Esophagus muscularis mucosa (tissue), 4 donors: ENCODE measurements at regions of chr22 and their contacts with region 1.

Region 1: DNA sequence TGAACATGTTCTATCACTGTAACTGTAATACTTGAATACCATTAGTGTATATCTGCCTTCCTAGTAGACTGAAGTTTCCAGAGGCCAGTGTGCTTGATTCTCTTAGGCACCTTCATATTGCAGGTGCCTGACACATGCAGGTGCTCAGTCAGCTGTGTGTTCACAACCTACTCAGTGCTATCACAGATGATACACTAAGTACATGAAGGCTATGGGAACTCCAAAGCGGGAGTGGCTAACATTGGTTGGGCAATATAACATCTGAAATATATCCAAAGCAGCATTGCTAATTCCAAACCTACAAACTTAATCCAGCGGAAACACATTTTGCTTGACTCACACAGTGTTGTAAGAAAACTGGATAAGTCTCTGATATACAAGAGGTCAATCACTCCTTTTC is 539.3 kb upstream of the ISX start:
- DNase-seq: peak; percentile 31
- H3K4me3 ChIP-seq: no peak overlapping the region
- H3K27ac ChIP-seq: no peak overlapping the region
- H3K4me1 ChIP-seq: no peaks in the 10 kb centered on the region
- H3K27me3 ChIP-seq: no peaks in the 10 kb centered on the region
- CTCF ChIP-seq: no peak
- EP300 ChIP-seq: no peak
- POLR2A ChIP-seq: no peak

Region 2: DNA sequence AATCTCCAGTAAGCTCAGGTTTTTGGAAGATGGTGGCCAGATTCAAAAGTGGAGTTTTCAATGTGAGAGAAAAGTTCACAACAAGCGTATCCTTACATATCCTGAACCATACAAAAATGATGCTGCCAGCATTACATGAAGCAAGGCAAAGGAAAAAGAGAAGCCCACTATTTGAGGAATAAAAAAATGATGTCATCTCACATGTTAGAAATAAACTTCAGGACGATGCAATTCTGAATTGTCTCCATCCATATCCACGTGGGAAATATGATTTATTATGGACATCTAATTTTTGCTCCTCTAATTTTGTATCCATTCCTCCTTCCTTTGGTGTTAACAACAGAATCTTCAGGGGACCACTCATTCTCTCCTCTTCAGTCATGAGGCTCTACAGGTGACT is 436.0 kb before region 1 on chr22:
- intact Hi-C with region 1: no loop called
- DNase-seq: no peak
- H3K4me3 ChIP-seq: no peak overlapping the region
- H3K27ac ChIP-seq: no peak overlapping the region
- H3K4me1 ChIP-seq: no peaks in the 10 kb centered on the region
- H3K27me3 ChIP-seq: peaks cover 0 to 17% (median 0%) of the 10 kb centered on the region in 4 donors
- CTCF ChIP-seq: no peak
- EP300 ChIP-seq: no peak
- POLR2A ChIP-seq: no peak

Region 3: GRCh38 chr22:34344702-34345101 is 182.0 kb before region 1 on chr22:
- intact Hi-C with region 1: no loop called
- DNase-seq: no peak
- H3K4me3 ChIP-seq: no peak overlapping the region
- H3K27ac ChIP-seq: no peak overlapping the region
- H3K4me1 ChIP-seq: no peaks in the 10 kb centered on the region
- H3K27me3 ChIP-seq: peaks cover 0 to 5% (median 0%) of the 10 kb centered on the region in 4 donors
- CTCF ChIP-seq: no peak
- EP300 ChIP-seq: no peak
- POLR2A ChIP-seq: no peak

Region 4: GRCh38 chr22:34462795-34463194 is 63.9 kb before region 1 on chr22:
- intact Hi-C with region 1: loop called (anchors 10 kb)
- DNase-seq: peak; percentile 68
- H3K4me3 ChIP-seq: no peak overlapping the region
- H3K27ac ChIP-seq: no peak overlapping the region
- H3K4me1 ChIP-seq: no peaks in the 10 kb centered on the region
- H3K27me3 ChIP-seq: peaks cover 0 to 17% (median 0%) of the 10 kb centered on the region in 4 donors
- CTCF ChIP-seq: no peak
- EP300 ChIP-seq: no peak
- POLR2A ChIP-seq: no peak

Region 5: DNA sequence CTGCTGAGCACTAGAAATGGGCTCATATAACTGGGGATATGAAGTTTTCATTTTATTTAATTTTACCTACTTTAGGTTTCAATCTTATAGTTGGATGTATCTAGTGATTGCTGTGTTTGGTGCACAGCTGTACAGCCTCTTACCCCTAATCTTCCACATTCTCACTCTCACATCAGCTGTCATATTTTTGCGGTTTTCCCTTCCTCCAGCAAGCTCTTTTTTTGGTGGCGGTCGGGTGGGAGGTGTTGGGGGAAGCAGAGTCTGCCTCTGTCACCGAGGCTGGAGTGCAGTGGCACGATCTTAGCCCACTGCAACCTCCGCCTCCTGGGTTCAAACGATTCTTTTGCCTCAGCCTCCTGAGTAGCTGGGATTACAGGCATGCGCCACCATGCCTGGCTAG is 94.2 kb after region 1 on chr22:
- intact Hi-C with region 1: no loop called
- DNase-seq: no peak
- H3K4me3 ChIP-seq: no peak overlapping the region
- H3K27ac ChIP-seq: no peak overlapping the region
- H3K4me1 ChIP-seq: no peaks in the 10 kb centered on the region
- H3K27me3 ChIP-seq: peaks cover 0 to 7% (median 0%) of the 10 kb centered on the region in 4 donors
- CTCF ChIP-seq: no peak
- EP300 ChIP-seq: no peak
- POLR2A ChIP-seq: no peak